Calu3 (cell line): ENCODE measurements at regions of chr3 and their contacts with region 1.

Region 1: DNA sequence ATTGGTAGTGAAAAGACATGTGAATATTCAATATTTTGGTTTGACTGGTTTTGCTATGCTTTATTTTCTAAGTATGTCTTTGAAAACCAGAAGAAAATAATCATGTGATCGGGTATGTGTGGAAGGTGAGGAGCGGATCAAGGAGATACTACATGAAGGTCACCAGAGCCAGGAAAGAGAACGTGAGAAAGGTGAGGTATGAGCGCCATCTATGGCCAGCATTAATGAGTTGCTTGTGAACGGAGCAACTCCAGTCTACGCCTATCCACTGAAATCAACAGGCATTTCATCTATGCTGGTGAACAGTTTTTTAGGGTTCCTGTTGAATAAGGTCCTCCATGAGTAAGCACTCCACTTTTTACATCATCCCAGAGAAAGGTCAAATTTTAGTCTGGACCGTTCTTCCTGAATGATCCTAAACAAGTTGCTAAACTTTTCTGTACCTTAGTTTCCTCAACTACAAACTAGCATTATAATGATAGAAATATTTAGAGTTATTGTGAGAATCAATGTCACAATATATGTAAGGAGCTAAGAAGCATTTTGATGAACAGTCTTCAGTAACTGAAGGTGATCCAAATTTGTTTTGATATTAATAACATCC is 1435.2 kb upstream of the CADM2 start:
- DNase-seq: peak; percentile 60
- H3K4me3 Mint-ChIP-seq: no peak overlapping the region
- H3K27ac Mint-ChIP-seq: no peak overlapping the region
- H3K4me1 Mint-ChIP-seq: no peaks in the 10 kb centered on the region
- H3K27me3 Mint-ChIP-seq: no peaks in the 10 kb centered on the region
- CTCF ChIP-seq: peak; percentile 57

Region 2: GRCh38 chr3:82496890-82497560 is 1026.5 kb before region 1 on chr3:
- CTCF ChIA-PET with region 1: no interaction called
- intact Hi-C with region 1: loop called (anchors 10 kb)
- DNase-seq: peak; percentile 12
- H3K4me3 Mint-ChIP-seq: no peak overlapping the region
- H3K27ac Mint-ChIP-seq: no peak overlapping the region
- H3K4me1 Mint-ChIP-seq: no peaks in the 10 kb centered on the region
- H3K27me3 Mint-ChIP-seq: no peaks in the 10 kb centered on the region
- CTCF ChIP-seq: peak; percentile 10

Region 3: DNA sequence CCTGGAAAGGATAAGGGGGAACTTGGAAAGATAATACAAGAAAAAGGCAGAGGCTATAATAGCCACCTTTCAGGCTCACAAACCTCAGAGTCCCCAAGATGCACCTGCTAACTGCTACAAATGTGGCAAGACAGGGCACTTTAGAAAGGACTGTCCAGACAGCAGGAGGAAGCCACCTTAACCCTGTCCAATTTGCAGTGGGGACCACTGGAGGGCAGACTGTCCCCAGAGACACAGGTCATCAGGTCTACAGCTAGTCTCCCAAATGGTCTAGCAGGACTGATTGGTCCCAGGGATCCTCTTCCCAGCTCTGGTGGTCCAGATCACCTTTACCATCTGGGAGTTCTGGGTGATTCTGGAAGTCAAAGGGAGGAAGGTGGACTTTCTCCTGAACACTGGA is 879.6 kb before region 1 on chr3:
- CTCF ChIA-PET with region 1: no interaction called
- intact Hi-C with region 1: loop called (anchors 1 kb)
- DNase-seq: peak; percentile 41
- H3K4me3 Mint-ChIP-seq: no peak overlapping the region
- H3K27ac Mint-ChIP-seq: no peak overlapping the region
- H3K4me1 Mint-ChIP-seq: peaks cover 5% of the 10 kb centered on the region
- H3K27me3 Mint-ChIP-seq: no peaks in the 10 kb centered on the region
- CTCF ChIP-seq: no peak

Region 4: DNA sequence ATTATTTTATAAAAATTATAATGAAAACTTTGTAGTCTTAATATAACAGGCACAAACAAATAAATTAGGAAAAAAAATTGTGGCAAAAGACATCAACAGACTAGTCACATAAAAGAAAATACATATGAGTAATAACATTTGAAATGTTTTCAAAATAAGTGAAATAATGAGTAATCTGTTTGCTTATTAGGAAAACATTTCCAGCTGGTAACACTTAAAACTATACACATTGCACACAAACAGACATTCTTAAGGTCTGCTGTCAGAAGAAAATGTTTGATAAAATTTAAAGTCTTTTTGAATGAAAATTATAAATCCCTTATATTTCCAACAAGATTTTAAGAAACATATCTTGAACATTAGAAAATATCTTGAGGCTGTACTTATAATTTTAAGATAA is 109.0 kb after region 1 on chr3:
- CTCF ChIA-PET with region 1: no interaction called
- intact Hi-C with region 1: no loop called
- DNase-seq: no peak
- H3K4me3 Mint-ChIP-seq: no peak overlapping the region
- H3K27ac Mint-ChIP-seq: no peak overlapping the region
- H3K4me1 Mint-ChIP-seq: no peaks in the 10 kb centered on the region
- H3K27me3 Mint-ChIP-seq: no peaks in the 10 kb centered on the region
- CTCF ChIP-seq: no peak